ENCODE measurements at regions of chr9 and their contacts with region 1.

Region 1: GRCh38 chr9:123608104-123608503 is 252.1 kb downstream of the CRB2 start:
- DNase-seq: no peak
- ATAC-seq: no peak
- H3K4me3 ChIP-seq: no peak overlapping the region
- H3K27ac ChIP-seq: no peak overlapping the region
- H3K4me1 ChIP-seq: peaks cover 0 to 12% (median 0%) of the 10 kb centered on the region in 9 donors
- H3K27me3 ChIP-seq: no peaks in the 10 kb centered on the region
- CTCF ChIP-seq: no peak

Region 2: GRCh38 chr9:123401879-123402513 is 206.1 kb before region 1 on chr9:
- intact Hi-C with region 1: loop called in 1 of 10 experiments (anchors 10 kb)
- DNase-seq: peak in 1 of 2 donors; percentile 24
- ATAC-seq: peak; percentile 71 to 91 (median 84)
- H3K4me3 ChIP-seq: peak overlapping the region in 1 of 10 donors; percentile 8
- H3K27ac ChIP-seq: peak overlapping the region in 1 of 10 donors; percentile 6
- H3K4me1 ChIP-seq: peaks cover 0 to 15% (median 6%) of the 10 kb centered on the region in 9 donors
- H3K27me3 ChIP-seq: no peaks in the 10 kb centered on the region
- CTCF ChIP-seq: peak; percentile 49 to 78 (median 67)

Region 3: DNA sequence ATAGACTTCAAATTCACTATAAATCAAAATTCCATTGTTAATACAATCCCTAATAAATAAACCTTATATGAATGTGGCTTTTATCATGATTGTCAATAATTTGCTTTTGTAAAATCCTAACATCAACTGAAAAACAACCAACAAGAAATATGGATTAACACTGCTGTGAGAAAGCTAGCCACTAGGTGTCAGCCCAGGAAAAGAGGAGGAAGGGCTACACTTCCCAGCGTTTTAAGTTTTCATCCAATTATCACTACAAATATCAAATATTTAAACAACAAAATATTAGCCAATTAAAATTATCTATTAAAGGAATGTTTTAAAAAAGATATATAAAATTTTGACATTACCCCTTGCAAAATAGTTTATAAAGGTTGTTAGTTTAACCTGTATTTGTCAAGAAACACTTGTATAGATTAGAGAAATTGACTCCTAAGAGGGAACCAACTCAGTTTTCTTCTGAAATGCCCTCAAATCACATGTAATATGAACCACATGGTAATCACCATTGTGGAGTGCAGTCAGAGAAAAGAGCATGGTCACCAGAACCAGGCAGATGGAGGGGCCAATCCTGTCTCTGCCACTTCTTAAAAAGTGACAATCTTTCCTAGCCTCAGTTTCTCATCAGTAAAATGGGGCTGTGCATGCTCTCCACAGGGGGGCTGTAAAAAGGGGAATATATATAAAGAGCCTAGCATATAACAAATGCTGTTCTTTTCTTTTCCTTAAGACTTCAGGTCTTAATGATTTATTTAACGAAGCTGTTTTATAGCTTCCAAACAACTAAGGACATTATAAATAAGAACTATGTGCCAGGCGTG is 63.9 kb before region 1 on chr9:
- intact Hi-C with region 1: no loop called
- DNase-seq: no peak
- ATAC-seq: no peak
- H3K4me3 ChIP-seq: no peak overlapping the region
- H3K27ac ChIP-seq: no peak overlapping the region
- H3K4me1 ChIP-seq: peaks cover 0 to 10% (median 4%) of the 10 kb centered on the region in 9 donors
- H3K27me3 ChIP-seq: no peaks in the 10 kb centered on the region
- CTCF ChIP-seq: peak; percentile 58 to 92 (median 80)

Measured in heart right ventricle (tissue), 16 donors.